ENCODE measurements at regions of chr3 and their contacts with region 1.

Region 1: DNA sequence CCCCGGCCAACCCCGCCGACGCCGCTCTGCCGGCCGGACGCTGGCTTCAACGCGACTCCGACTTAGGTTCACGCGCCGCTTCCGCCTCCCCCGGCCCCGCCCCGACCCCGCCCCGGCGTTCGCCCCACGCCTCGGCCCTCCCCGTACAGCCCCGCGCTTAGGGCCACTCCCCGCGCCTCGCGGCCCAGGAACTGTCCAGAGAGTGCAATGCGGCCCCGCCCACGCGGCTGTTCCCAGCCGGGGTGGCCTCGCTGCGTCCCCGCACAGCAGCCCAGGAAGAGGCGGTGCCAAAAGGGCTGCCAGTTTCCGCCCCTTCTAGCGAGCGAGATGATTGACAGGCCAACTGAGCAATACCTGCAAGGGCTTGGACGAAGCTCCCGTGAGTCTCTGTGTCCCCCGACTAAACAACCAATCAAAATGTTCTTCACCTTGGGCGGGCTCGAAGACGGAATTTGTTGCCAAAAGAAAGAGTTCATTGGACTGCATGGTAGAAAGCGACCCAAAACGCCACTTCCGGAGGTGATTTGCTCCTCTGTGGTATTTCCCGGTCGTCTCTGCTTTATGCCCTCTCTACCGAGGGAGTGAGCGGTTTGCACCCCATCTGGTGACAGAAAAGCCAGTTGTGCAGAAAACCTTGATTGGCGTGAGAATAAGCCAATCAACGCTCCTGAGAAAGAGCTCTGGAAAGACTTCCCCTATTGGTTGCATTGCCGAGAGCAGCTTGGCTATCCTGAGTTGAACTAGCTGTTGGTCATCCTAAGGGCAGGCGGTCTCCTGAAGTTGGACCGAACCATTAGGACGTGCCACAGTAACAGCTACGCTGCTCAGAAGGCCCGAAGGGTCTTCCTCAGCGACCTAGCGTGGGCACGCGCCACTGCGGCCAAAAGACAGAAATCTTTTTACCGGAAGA is at the start of gene UBP1:
- DNase-seq: peak; percentile 99
- H3K4me3 Mint-ChIP-seq: peak within 1 kb of the TSS; percentile 100
- H3K27ac Mint-ChIP-seq: peak within 1 kb of the TSS; percentile 100
- H3K4me1 Mint-ChIP-seq: peaks cover 37% of the 10 kb centered on the region
- H3K27me3 Mint-ChIP-seq: no peaks in the 10 kb centered on the region
- total RNA-seq, gene UBP1: 59.2 and 63.8 TPM in 2 replicates

Region 2: GRCh38 chr3:32570421-32571191 is 870.0 kb before region 1 on chr3 and contains the start of gene DYNC1LI1:
- intact Hi-C with region 1: loop called (anchors 10 kb)
- DNase-seq: peak; percentile 90
- H3K4me3 Mint-ChIP-seq: peak within 1 kb of the TSS; percentile 88
- H3K27ac Mint-ChIP-seq: peak within 1 kb of the TSS; percentile 91
- H3K4me1 Mint-ChIP-seq: peaks cover 20% of the 10 kb centered on the region
- H3K27me3 Mint-ChIP-seq: no peaks in the 10 kb centered on the region
- total RNA-seq, gene DYNC1LI1: 38.2 and 40.6 TPM in 2 replicates

Region 3: GRCh38 chr3:32992322-32992692 is 448.3 kb before region 1 on chr3:
- intact Hi-C with region 1: loop called (anchors 2 kb)
- DNase-seq: no peak
- H3K4me3 Mint-ChIP-seq: peak overlapping the region; percentile 79
- H3K27ac Mint-ChIP-seq: peak overlapping the region; percentile 97
- H3K4me1 Mint-ChIP-seq: peaks cover 73% of the 10 kb centered on the region
- H3K27me3 Mint-ChIP-seq: no peaks in the 10 kb centered on the region

Region 4: DNA sequence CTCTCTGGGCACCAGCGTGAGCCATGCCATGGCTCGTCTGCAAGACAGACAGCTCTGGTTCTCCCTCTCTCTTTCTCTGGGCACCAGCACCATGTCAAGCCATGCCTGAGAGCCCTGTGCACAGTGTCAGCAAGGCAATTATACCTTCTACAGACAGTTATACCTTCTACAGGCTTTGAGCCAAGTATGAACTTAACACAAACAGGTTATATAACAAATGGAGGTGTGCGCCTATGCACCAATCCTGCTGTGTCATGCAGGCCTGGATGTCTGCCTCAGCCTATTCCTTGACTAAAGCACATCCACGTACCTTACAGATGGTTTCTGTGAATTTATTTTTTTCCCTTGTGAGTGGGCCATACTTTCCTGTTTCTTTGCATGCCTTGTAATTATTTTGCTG is 169.3 kb before region 1 on chr3:
- intact Hi-C with region 1: no loop called
- DNase-seq: no peak
- H3K4me3 Mint-ChIP-seq: no peak overlapping the region
- H3K27ac Mint-ChIP-seq: no peak overlapping the region
- H3K4me1 Mint-ChIP-seq: no peaks in the 10 kb centered on the region
- H3K27me3 Mint-ChIP-seq: peaks cover 5% of the 10 kb centered on the region

Region 5: GRCh38 chr3:33392703-33393125 is 47.9 kb before region 1 on chr3:
- intact Hi-C with region 1: loop called (anchors 5 kb)
- DNase-seq: no peak
- H3K4me3 Mint-ChIP-seq: no peak overlapping the region
- H3K27ac Mint-ChIP-seq: no peak overlapping the region
- H3K4me1 Mint-ChIP-seq: peaks cover 14% of the 10 kb centered on the region
- H3K27me3 Mint-ChIP-seq: no peaks in the 10 kb centered on the region

Region 6: GRCh38 chr3:33467786-33468185 is 27.2 kb after region 1 on chr3:
- intact Hi-C with region 1: no loop called
- DNase-seq: no peak
- H3K4me3 Mint-ChIP-seq: no peak overlapping the region
- H3K27ac Mint-ChIP-seq: no peak overlapping the region
- H3K4me1 Mint-ChIP-seq: no peaks in the 10 kb centered on the region
- H3K27me3 Mint-ChIP-seq: no peaks in the 10 kb centered on the region

Region 7: GRCh38 chr3:33496449-33496848 is 55.9 kb after region 1 on chr3:
- intact Hi-C with region 1: no loop called
- DNase-seq: no peak
- H3K4me3 Mint-ChIP-seq: no peak overlapping the region
- H3K27ac Mint-ChIP-seq: no peak overlapping the region
- H3K4me1 Mint-ChIP-seq: no peaks in the 10 kb centered on the region
- H3K27me3 Mint-ChIP-seq: no peaks in the 10 kb centered on the region

Region 8: DNA sequence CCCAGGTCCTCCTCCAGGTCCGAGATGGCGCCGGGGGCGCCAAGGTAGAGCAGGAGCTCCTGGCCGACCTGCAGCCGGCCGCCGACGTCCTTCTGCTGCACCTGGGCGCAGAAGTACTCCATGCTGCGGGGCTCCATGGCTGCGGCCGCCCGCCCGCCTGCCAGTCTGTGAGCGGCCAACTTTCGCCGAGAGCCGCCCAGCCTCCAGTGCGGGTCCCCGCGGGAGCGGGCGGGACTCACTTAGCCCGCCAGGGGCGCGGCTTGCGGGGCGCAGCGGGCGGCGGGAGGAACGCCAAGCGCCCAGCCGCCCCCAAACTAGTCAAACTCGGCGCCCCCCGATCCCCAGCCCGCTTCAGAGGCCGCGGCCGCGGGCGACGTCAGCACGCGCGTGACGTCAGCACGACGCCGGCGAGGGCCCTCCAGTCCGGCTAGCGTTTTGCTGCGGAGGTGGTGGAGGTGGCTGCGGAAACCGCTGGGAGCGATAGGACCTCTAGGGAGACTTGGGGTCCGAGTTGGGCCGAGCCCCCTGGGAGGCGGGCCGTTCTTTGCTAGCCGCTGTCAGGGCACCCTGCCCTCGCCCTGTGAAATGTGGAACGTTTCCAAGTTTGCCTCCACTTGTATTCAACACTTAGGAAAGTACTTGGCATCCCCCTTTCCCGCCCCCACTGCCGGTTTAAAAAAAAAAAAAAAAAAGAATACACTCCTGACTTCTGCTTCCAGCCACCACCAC is 277.5 kb after region 1 on chr3 and contains the start of gene CLASP2:
- intact Hi-C with region 1: loop called (anchors 2 kb)
- DNase-seq: peak; percentile 77
- H3K4me3 Mint-ChIP-seq: peak within 1 kb of the TSS; percentile 89
- H3K27ac Mint-ChIP-seq: peak within 1 kb of the TSS; percentile 86
- H3K4me1 Mint-ChIP-seq: peaks cover 11% of the 10 kb centered on the region
- H3K27me3 Mint-ChIP-seq: peaks cover 2% of the 10 kb centered on the region
- total RNA-seq, gene CLASP2: 58.8 and 70.9 TPM in 2 replicates

Measured in activated T-helper 2 cell treated with anti-CD3 and anti-CD28 coated beads, Interferon-gamma antibody, Interleukin-2, Interleukin-4, amounts not matched to agents 10 μg/mL and 5 μg/mL and 100 μg/mL, durations not matched to agents 14 hours and 24 hours and 36 hours (primary cell).